Psoas muscle (tissue), 8 donors: ENCODE measurements at regions of chr2 and their contacts with region 1.

Region 1: GRCh38 chr2:55419679-55420438 is at the start of gene CCDC88A:
- DNase-seq: peak; percentile 98
- ATAC-seq: peak; percentile 95 to 97 (median 97)
- H3K4me3 ChIP-seq: peak within 1 kb of the TSS; percentile 89
- H3K27ac ChIP-seq: peak within 1 kb of the TSS; percentile 87
- H3K4me1 ChIP-seq: peaks cover 13% of the 10 kb centered on the region
- H3K27me3 ChIP-seq: no peaks in the 10 kb centered on the region
- CTCF ChIP-seq: peak; percentile 30
- total RNA-seq, gene CCDC88A: 12.3 to 21.4 (median 16.8) TPM

Region 2: DNA sequence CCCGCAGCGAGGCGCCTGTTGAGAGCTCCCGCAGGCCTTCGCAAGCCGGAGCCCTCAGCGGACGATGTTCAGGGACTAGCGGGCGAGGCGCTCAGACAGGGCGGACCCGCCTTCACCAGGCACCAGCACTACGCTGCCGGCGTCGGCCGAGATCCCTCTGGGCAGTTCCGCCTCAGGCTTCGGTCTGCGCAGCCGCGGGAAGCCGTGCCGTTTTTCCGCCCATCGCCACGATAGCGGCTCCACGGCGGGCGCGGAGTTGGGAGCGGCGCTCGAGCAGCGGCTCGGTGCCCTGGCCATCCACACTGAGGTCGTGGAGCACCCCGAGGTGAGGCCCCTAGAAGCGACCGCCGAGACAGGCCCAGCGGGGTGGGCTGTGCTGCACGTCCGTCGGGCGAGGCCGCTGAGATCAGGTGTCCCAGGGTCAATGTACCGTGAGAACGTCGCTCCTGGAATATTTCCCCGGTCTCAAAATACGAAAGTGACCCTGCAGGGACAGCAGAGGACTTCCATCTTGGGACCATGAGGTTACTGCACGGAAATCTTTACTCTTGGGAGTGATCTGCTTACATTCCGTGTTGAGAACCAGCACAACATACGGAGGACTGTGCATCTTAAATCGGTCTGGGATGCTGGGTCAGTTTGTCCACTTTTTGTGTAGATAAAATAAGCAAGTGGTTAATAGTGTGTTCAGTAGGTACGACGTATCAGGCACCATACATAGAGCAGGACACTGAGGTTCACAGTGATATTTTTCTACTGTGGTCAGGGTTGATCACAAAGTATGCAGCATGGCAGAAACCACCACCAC is 137.5 kb before region 1 on chr2:
- intact Hi-C with region 1: loop called (anchors 5 to 10 kb)
- DNase-seq: peak; percentile 91 to 94
- ATAC-seq: peak; percentile 93 to 98 (median 96)
- H3K4me3 ChIP-seq: peak overlapping the region; percentile 75
- H3K27ac ChIP-seq: peak overlapping the region; percentile 88
- H3K4me1 ChIP-seq: peaks cover 11% of the 10 kb centered on the region
- H3K27me3 ChIP-seq: no peaks in the 10 kb centered on the region
- CTCF ChIP-seq: no peak

Region 3: DNA sequence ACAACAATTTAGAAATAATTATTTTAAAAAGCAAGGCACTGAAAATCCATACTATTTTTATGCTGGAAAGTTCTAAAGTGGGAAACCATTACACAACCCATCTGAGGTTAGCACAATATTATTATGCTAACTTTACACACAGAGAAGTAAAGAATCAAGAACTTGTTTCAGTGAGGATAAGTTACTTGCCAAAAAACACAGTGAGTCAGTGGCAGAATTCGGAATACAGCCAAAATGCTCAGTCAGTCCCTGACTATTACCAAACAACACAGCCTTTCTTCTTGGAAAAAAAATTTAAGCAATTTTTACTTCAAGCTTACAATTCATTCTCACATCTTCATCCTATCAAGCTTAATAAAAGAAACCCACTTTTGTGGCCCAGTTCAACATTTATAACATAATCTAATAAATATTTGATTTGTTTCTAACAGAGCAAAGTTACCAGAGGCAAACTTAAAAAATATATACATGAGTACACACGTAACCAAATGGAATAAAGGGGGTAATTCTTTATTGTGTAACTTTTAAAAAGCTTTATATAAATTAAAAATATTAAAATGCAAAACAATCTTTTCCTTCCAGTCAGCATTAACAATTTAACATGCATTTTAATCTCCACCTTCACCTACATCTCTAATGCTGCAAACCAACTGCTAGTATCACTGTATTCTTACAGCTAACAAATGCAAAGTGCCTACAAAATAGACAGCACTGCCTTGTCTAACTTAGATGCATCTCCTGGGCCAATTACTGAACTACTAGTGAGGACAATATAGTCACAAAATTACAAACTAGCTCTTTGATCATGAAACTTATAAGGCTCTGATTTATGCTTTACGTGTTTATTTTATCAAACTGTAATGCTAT is 55.4 kb before region 1 on chr2:
- intact Hi-C with region 1: loop called in 1 of 2 experiments (anchors 10 kb)
- DNase-seq: no peak
- ATAC-seq: peak; percentile 42 to 84 (median 75)
- H3K4me3 ChIP-seq: no peak overlapping the region
- H3K27ac ChIP-seq: no peak overlapping the region
- H3K4me1 ChIP-seq: no peaks in the 10 kb centered on the region
- H3K27me3 ChIP-seq: no peaks in the 10 kb centered on the region
- CTCF ChIP-seq: no peak

Region 4: GRCh38 chr2:55519938-55520885 is 100.4 kb after region 1 on chr2:
- intact Hi-C with region 1: loop called (anchors 5 to 10 kb)
- DNase-seq: no peak
- ATAC-seq: peak; percentile 8 to 39 (median 17)
- H3K4me3 ChIP-seq: peak overlapping the region; percentile 92
- H3K27ac ChIP-seq: peak overlapping the region; percentile 86
- H3K4me1 ChIP-seq: peaks cover 6% of the 10 kb centered on the region
- H3K27me3 ChIP-seq: no peaks in the 10 kb centered on the region
- CTCF ChIP-seq: no peak

Region 5: GRCh38 chr2:55617175-55618024 is 197.5 kb after region 1 on chr2 and contains the start of gene PPP4R3B:
- intact Hi-C with region 1: loop called in 1 of 2 experiments (anchors 1 kb)
- DNase-seq: peak; percentile 100
- ATAC-seq: peak; percentile 92 to 97 (median 96)
- H3K4me3 ChIP-seq: peak within 1 kb of the TSS; percentile 95
- H3K27ac ChIP-seq: peak within 1 kb of the TSS; percentile 99
- H3K4me1 ChIP-seq: peaks cover 42% of the 10 kb centered on the region
- H3K27me3 ChIP-seq: no peaks in the 10 kb centered on the region
- CTCF ChIP-seq: peak; percentile 46
- total RNA-seq, gene PPP4R3B: 21.0 to 32.8 (median 24.1) TPM

Region 6: DNA sequence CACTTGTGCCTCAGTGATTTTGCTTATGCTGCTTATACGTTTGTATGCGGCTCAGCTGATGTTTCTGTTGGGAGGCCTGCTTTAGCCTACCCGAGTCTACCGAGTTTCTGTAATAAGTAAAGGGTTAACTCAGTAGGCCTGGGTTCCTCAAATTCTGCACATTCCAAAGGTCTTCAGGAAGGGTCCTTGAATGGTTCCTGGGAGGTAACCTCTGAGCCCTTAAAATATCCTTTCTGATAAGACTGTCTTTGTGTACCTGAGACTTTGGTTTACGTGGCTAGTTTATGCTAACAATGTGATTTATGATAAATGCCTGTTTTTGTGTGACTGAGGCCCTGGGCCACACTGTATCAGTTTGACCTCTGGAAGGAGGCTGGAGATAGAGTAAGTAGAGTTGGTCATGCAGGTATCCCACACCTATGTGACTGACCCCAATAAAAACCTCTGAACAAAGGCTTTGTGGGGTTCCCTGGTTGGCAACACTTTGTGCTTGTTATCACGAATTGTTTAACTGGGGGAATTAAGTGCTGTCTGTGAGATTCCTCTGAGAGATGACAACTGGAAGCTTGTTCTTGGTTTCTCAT is 292.7 kb after region 1 on chr2:
- intact Hi-C with region 1: no loop called
- DNase-seq: no peak
- ATAC-seq: no peak
- H3K4me3 ChIP-seq: no peak overlapping the region
- H3K27ac ChIP-seq: no peak overlapping the region
- H3K4me1 ChIP-seq: no peaks in the 10 kb centered on the region
- H3K27me3 ChIP-seq: peaks cover 0 to 10% (median 0%) of the 10 kb centered on the region in 3 donors
- CTCF ChIP-seq: no peak

Region 7: GRCh38 chr2:55885129-55885943 is 465.5 kb after region 1 on chr2:
- intact Hi-C with region 1: no loop called
- DNase-seq: no peak
- ATAC-seq: peak; percentile 34 to 71 (median 53)
- H3K4me3 ChIP-seq: no peak overlapping the region
- H3K27ac ChIP-seq: no peak overlapping the region
- H3K4me1 ChIP-seq: no peaks in the 10 kb centered on the region
- H3K27me3 ChIP-seq: no peaks in the 10 kb centered on the region
- CTCF ChIP-seq: no peak